ENCODE measurements at regions of chr13 and their contacts with region 1.

Region 1: DNA sequence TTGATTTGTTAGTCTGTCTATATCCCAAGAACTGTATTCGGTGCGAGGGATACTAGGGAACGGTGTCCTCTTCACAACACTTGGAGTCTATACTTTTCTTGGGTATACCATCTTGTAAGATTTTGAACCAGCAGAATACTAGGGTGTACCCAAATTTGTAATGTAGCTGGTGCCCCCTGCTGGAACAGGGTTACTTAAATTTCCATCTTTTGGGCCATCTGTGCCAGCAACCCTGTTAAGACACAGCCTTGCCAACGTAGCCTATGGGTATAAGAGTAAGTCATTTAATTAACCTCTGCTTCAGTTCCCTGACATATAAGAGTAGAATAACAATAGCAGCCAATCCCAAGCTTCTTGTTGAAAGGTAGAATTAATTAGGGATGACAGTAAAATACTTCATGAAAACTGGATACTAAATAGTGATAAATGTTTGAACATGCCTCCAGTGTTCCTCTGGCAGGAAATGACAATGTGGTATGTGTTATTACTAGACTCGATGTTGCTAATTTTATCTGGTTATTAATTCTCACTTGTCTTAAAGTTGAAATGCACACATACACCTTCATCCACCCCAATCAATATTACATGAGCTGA is 607.6 kb downstream of the FGF9 start:
- DNase-seq: peak; percentile 56 to 70 (median 66)
- H3K4me3 ChIP-seq: no peak overlapping the region
- H3K4me3 Mint-ChIP-seq: no peak overlapping the region
- H3K27ac ChIP-seq: no peak overlapping the region
- H3K27ac Mint-ChIP-seq: peak overlapping the region in 1 of 7 donors; percentile 2
- H3K4me1 ChIP-seq: no peaks in the 10 kb centered on the region
- H3K4me1 Mint-ChIP-seq: peaks cover 2 to 10% (median 4%) of the 10 kb centered on the region in 4 donors
- H3K27me3 ChIP-seq: no peaks in the 10 kb centered on the region
- H3K27me3 Mint-ChIP-seq: no peaks in the 10 kb centered on the region

Region 2: GRCh38 chr13:21625366-21625765 is 653.1 kb before region 1 on chr13:
- CTCF ChIA-PET with region 1: interaction called, 3 read pairs
- POLR2A ChIA-PET with region 1: no interaction called
- intact Hi-C with region 1: loop called (anchors 1 kb)
- DNase-seq: peak in 4 of 5 donors; percentile 20 to 26 (median 25)
- H3K4me3 ChIP-seq: no peak overlapping the region
- H3K4me3 Mint-ChIP-seq: no peak overlapping the region
- H3K27ac ChIP-seq: no peak overlapping the region
- H3K27ac Mint-ChIP-seq: no peak overlapping the region
- H3K4me1 ChIP-seq: no peaks in the 10 kb centered on the region
- H3K4me1 Mint-ChIP-seq: peaks cover 0 to 2% (median under 1%) of the 10 kb centered on the region in 4 donors
- H3K27me3 ChIP-seq: no peaks in the 10 kb centered on the region
- H3K27me3 Mint-ChIP-seq: peaks cover 2 to 5% of the 10 kb centered on the region in 2 donors

Region 3: GRCh38 chr13:21670883-21671619 is 607.4 kb before region 1 on chr13 and contains the start of gene FGF9:
- CTCF ChIA-PET with region 1: interaction called, 5 read pairs
- POLR2A ChIA-PET with region 1: interaction called, 9 read pairs
- intact Hi-C with region 1: loop called (anchors 1 kb)
- DNase-seq: peak; percentile 83 to 89 (median 87)
- H3K4me3 ChIP-seq: peak within 1 kb of the TSS; percentile 69 to 86
- H3K4me3 Mint-ChIP-seq: peak within 1 kb of the TSS; percentile 89 to 98 (median 92)
- H3K27ac ChIP-seq: peak within 1 kb of the TSS; percentile 19
- H3K27ac Mint-ChIP-seq: peak within 1 kb of the TSS; percentile 65 to 93 (median 89)
- H3K4me1 ChIP-seq: peaks cover 45% of the 10 kb centered on the region
- H3K4me1 Mint-ChIP-seq: peaks cover 30 to 58% (median 40%) of the 10 kb centered on the region in 4 donors
- H3K27me3 ChIP-seq: peaks cover 11% of the 10 kb centered on the region
- H3K27me3 Mint-ChIP-seq: peaks cover 6 to 7% of the 10 kb centered on the region in 2 donors
- total RNA-seq, gene FGF9: 6.5 to 7.3 TPM

Region 4: DNA sequence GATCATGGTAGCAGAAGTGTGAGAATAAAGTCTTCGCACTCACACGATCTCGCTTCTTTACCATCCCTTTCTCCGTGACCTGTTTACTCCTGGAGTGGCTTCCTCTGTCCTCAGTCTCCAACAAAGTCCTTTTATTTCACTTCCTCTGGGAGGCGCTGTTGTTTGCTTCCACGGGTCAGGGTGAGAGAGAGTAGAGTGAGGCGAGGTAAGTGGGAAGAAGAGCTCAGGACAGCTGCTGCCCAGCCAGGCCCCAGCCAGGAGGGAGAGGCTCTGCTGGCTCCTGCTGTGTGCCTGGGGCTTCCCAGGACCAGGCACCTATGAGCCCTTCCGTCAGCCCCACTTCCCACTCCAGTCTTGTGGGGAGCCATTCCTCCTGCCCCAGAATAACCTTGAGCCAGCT is 365.4 kb before region 1 on chr13:
- CTCF ChIA-PET with region 1: no interaction called
- POLR2A ChIA-PET with region 1: no interaction called
- intact Hi-C with region 1: loop called (anchors 5 kb)
- DNase-seq: no peak
- H3K4me3 ChIP-seq: no peak overlapping the region
- H3K4me3 Mint-ChIP-seq: no peak overlapping the region
- H3K27ac ChIP-seq: no peak overlapping the region
- H3K27ac Mint-ChIP-seq: no peak overlapping the region
- H3K4me1 ChIP-seq: no peaks in the 10 kb centered on the region
- H3K4me1 Mint-ChIP-seq: no peaks in the 10 kb centered on the region
- H3K27me3 ChIP-seq: no peaks in the 10 kb centered on the region
- H3K27me3 Mint-ChIP-seq: peaks cover 0 to 4% of the 10 kb centered on the region in 2 donors

Region 5: DNA sequence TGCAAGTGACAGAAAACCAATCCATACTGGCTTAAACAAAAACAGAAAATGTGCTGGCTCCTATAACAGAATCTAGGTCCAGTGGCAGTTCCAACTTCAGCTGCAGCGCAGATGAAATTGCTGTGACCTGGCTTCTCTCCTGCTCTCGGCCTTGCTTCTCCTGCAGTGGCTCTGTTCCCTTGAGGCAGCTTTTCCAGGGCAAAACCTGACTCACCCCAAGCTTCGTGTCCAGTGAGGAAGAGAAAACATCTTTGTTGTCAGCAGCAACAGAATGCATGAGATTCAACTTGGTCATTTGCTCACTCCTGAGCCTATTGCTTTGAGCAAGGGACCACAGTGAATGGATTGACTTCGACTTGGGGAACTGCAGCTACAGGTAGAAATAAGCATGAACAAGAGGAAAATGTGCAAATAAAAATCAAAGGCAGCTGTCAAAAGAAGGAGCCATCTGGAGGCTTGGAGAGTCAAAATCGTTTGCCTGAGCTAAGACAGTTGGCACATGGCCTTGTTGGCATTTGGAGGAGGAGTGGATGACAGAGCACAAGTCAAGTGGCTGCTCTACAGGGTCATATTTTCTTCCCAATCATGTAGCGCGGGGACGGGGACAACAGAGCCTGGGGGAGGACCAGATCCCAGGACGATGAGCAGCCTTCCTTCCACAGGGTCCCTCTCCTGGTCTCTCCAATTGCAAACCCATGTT is 84.2 kb before region 1 on chr13:
- CTCF ChIA-PET with region 1: no interaction called
- POLR2A ChIA-PET with region 1: no interaction called
- intact Hi-C with region 1: no loop called
- DNase-seq: no peak
- H3K4me3 ChIP-seq: no peak overlapping the region
- H3K4me3 Mint-ChIP-seq: no peak overlapping the region
- H3K27ac ChIP-seq: no peak overlapping the region
- H3K27ac Mint-ChIP-seq: no peak overlapping the region
- H3K4me1 ChIP-seq: no peaks in the 10 kb centered on the region
- H3K4me1 Mint-ChIP-seq: peaks cover 0 to 3% (median 0%) of the 10 kb centered on the region in 4 donors
- H3K27me3 ChIP-seq: no peaks in the 10 kb centered on the region
- H3K27me3 Mint-ChIP-seq: peaks cover 0 to 1% of the 10 kb centered on the region in 2 donors